IMR-90 (cell line): ENCODE measurements at regions of chr1 and their contacts with region 1.

Region 1: DNA sequence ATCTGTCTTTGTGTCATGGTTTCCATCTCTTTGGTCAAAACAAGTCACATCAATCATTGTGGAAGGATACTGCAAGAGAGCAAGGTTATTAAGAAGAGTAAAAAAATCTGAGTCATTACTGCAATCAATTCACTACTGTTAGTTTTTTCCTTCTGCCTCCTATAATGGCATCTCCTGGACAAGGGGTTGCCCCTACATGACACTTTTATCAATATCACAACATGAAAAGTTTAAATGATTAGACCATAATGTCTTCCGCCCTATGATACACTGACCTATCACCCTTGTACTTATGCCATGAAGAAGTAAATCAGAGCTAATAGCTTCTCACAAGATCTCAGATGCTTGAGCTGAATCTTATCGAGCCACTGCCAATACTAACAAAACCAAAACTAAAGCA is 223.9 kb downstream of the KCNK2 start:
- DNase-seq: no peak
- ATAC-seq: no peak
- H3K4me3 ChIP-seq: no peak overlapping the region
- H3K27ac ChIP-seq: no peak overlapping the region
- H3K4me1 ChIP-seq: no peaks in the 10 kb centered on the region
- H3K27me3 ChIP-seq: no peaks in the 10 kb centered on the region
- CTCF ChIP-seq: no peak
- POLR2A ChIP-seq: no peak
- RAD21 ChIP-seq: no peak

Region 2: GRCh38 chr1:215146341-215146826 is 160.0 kb before region 1 on chr1:
- CTCF ChIA-PET with region 1: no interaction called
- POLR2A ChIA-PET with region 1: no interaction called
- dilution Hi-C with region 1: no loop called
- in situ Hi-C with region 1: no loop called
- intact Hi-C with region 1: no loop called
- DNase-seq: peak; percentile 64
- ATAC-seq: no peak
- H3K4me3 ChIP-seq: no peak overlapping the region
- H3K27ac ChIP-seq: no peak overlapping the region
- H3K4me1 ChIP-seq: no peaks in the 10 kb centered on the region
- H3K27me3 ChIP-seq: no peaks in the 10 kb centered on the region
- CTCF ChIP-seq: peak; percentile 74
- POLR2A ChIP-seq: no peak
- RAD21 ChIP-seq: peak; percentile 76

Region 3: GRCh38 chr1:215405211-215405610 is 98.8 kb after region 1 on chr1:
- CTCF ChIA-PET with region 1: no interaction called
- POLR2A ChIA-PET with region 1: no interaction called
- dilution Hi-C with region 1: no loop called
- in situ Hi-C with region 1: no loop called
- intact Hi-C with region 1: no loop called
- DNase-seq: peak; percentile 59
- ATAC-seq: no peak
- H3K4me3 ChIP-seq: no peak overlapping the region
- H3K27ac ChIP-seq: no peak overlapping the region
- H3K4me1 ChIP-seq: no peaks in the 10 kb centered on the region
- H3K27me3 ChIP-seq: no peaks in the 10 kb centered on the region
- CTCF ChIP-seq: no peak
- POLR2A ChIP-seq: no peak
- RAD21 ChIP-seq: no peak

Region 4: DNA sequence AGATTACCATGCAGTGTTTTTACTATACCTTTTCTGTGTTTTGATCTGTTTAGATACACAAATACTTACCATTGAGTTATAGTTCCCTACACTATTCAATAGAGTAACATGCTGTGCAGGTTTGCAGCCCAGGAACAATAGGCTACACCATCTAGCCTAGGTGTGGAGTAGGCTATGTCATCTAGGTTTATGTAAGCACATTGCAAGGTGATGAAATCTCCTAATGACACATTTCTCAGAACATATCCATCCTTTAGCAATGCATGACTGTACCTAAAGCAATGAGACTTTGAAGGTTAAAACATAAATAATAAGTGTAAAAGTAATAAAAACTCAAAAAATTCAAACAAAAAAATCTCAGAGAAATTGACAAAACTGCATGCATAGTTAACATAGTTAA is 758.2 kb after region 1 on chr1:
- CTCF ChIA-PET with region 1: no interaction called
- POLR2A ChIA-PET with region 1: interaction called, 16 read pairs
- dilution Hi-C with region 1: no loop called
- in situ Hi-C with region 1: no loop called
- intact Hi-C with region 1: no loop called
- DNase-seq: peak; percentile 66
- ATAC-seq: peak; percentile 49; the same call in 1 of the 2 replicates
- H3K4me3 ChIP-seq: no peak overlapping the region
- H3K27ac ChIP-seq: no peak overlapping the region
- H3K4me1 ChIP-seq: no peaks in the 10 kb centered on the region
- H3K27me3 ChIP-seq: no peaks in the 10 kb centered on the region
- CTCF ChIP-seq: no peak
- POLR2A ChIP-seq: no peak
- RAD21 ChIP-seq: no peak

Region 5: GRCh38 chr1:216081445-216081844 is 775.0 kb after region 1 on chr1:
- CTCF ChIA-PET with region 1: no interaction called
- POLR2A ChIA-PET with region 1: no interaction called
- dilution Hi-C with region 1: no loop called
- in situ Hi-C with region 1: no loop called
- intact Hi-C with region 1: no loop called
- DNase-seq: no peak
- ATAC-seq: no peak
- H3K4me3 ChIP-seq: no peak overlapping the region
- H3K27ac ChIP-seq: no peak overlapping the region
- H3K4me1 ChIP-seq: no peaks in the 10 kb centered on the region; the same call in 1 of the 2 replicates
- H3K27me3 ChIP-seq: no peaks in the 10 kb centered on the region
- CTCF ChIP-seq: no peak
- POLR2A ChIP-seq: no peak
- RAD21 ChIP-seq: no peak